Right lobe of liver (tissue), 6 donors: ENCODE measurements at regions of chr2 and their contacts with region 1.

Region 1: DNA sequence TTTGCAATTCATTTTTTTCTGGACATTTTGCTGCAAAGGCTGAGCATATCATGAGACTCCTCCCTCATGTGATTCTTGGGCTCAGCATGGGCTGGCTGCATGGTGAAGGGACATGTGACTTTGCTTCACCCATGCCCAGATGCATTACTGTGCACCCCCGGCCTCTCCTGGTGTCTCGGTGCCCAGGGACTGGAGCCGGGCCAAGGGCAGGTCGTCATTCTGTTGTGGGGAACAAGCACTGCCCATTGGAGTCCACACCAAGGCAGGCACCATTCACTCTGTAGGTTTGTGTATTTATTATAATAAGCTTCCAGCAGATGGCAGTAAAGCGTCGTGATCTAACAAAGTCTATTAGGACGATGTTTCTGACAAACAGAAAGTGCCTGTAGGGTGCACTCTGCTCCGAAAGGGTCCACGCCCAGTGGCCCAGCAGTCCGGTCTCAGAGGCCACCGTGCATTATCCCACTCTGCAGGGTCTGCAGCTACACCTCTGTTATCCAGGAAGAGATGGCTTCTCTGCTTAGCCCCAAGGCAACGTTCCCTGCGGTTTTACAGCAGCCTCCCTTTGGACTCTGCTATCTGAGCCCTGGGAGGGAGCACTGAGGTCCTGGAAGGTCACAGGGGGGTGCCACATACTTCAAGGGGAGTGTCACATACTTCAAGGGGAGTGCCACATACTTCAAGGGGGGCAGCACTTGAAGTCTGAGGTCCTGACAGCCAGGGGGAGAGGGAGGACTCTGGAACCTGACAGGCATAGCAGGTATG is 219.6 kb downstream of the TSN start:
- DNase-seq: peak; percentile 35 to 61 (median 55)
- ATAC-seq: peak; percentile 92 to 98 (median 96)
- H3K4me3 ChIP-seq: peak overlapping the region in 2 of 3 donors; percentile 22 to 25
- H3K27ac ChIP-seq: no peak overlapping the region
- H3K4me1 ChIP-seq: no peaks in the 10 kb centered on the region
- H3K27me3 ChIP-seq: no peaks in the 10 kb centered on the region
- CTCF ChIP-seq: peak; percentile 60 to 68 (median 62)
- POLR2A ChIP-seq: no peak

Region 2: DNA sequence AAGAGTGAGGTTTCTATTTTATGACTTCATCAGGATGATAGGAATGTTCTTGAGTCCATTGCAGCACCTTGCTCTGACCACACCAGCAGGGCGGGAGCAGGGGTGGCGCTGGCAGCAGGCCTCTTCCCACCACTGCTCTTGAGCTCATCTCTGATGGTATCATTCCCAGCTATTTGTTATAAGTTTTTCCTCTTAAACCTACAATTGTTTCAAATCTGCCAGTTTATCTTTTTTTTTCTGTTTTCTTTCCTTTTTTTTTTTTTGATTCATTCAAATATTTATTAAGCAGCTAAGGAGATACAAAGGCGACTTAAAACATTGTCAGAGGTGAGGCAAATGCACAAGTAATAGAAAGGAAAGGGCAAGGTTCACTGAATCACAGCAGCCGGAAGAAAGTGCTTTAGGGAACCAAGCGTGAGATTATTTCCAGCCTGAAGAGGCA is 267.1 kb before region 1 on chr2:
- intact Hi-C with region 1: no loop called
- DNase-seq: peak in 1 of 3 donors; percentile 37
- ATAC-seq: peak in 2 of 4 donors; percentile 30 to 60
- H3K4me3 ChIP-seq: no peak overlapping the region
- H3K27ac ChIP-seq: no peak overlapping the region
- H3K4me1 ChIP-seq: no peaks in the 10 kb centered on the region
- H3K27me3 ChIP-seq: no peaks in the 10 kb centered on the region
- CTCF ChIP-seq: no peak
- POLR2A ChIP-seq: no peak

Region 3: GRCh38 chr2:122451040-122451439 is 476.0 kb after region 1 on chr2:
- intact Hi-C with region 1: loop called in 1 of 2 experiments (anchors 5 kb)
- DNase-seq: no peak
- ATAC-seq: peak; percentile 86 to 93 (median 92)
- H3K4me3 ChIP-seq: no peak overlapping the region
- H3K27ac ChIP-seq: no peak overlapping the region
- H3K4me1 ChIP-seq: no peaks in the 10 kb centered on the region
- H3K27me3 ChIP-seq: no peaks in the 10 kb centered on the region
- CTCF ChIP-seq: peak; percentile 46 to 65 (median 62)
- POLR2A ChIP-seq: no peak